ENCODE measurements at regions of chr11 and their contacts with region 1.

Region 1: GRCh38 chr11:66069715-66070603 is at the start of gene PACS1:
- DNase-seq: peak in 1 of 2 experiments; percentile 73
- H3K4me3 ChIP-seq: peak within 1 kb of the TSS; percentile 72
- H3K27ac ChIP-seq: no peak within 1 kb of the TSS
- H3K4me1 ChIP-seq: peaks cover 22% of the 10 kb centered on the region
- H3K27me3 ChIP-seq: no peaks in the 10 kb centered on the region
- CTCF ChIP-seq: no peak
- total RNA-seq, gene PACS1: 100 and 102 TPM in 2 replicates

Region 2: DNA sequence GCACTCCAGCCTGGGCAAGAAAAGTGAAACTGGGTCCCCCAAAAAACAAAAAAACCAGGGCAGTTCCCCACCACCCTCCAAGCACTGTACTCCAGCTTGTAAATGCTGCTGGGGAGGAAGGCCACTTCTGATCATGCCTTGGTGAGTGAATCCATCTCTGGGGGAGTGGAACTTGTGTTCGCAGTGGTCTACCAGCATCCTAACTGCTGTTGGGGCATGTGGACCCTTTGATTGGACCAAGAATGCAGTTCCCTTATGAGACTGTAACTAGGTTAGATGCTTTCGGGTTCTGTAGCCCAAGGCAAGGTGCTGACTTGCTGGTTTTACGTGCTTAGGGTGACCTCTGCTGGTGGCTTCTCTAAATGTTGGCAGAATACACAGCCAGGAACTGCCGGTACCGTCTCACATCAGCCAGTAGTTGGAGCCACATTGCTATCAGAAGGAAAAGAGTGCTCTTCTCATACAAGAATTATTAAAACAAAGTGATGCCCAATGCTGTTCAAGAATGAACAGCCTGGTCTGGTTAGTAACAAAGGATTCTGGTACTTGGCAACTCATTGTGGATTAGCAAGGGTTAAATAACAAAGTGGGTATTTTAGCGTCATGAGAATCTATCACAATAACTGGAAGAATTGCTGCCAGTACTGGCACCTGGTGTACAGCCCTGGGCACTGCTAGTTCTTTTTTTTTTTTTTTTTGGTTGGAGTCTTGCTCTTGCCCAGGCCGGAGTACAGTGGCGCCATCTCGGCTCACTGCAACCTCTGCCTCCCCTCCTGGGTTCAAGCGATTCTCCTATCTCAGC is 81.0 kb before region 1 on chr11:
- CTCF ChIA-PET with region 1: no interaction called
- POLR2A ChIA-PET with region 1: no interaction called
- intact Hi-C with region 1: loop called (anchors 1 kb)
- DNase-seq: peak; percentile 87 to 92
- H3K4me3 ChIP-seq: no peak overlapping the region
- H3K27ac ChIP-seq: no peak overlapping the region
- H3K4me1 ChIP-seq: peaks cover 4% of the 10 kb centered on the region; the same call in 1 of the 2 replicates
- H3K27me3 ChIP-seq: no peaks in the 10 kb centered on the region
- CTCF ChIP-seq: peak; percentile 99

Region 3: DNA sequence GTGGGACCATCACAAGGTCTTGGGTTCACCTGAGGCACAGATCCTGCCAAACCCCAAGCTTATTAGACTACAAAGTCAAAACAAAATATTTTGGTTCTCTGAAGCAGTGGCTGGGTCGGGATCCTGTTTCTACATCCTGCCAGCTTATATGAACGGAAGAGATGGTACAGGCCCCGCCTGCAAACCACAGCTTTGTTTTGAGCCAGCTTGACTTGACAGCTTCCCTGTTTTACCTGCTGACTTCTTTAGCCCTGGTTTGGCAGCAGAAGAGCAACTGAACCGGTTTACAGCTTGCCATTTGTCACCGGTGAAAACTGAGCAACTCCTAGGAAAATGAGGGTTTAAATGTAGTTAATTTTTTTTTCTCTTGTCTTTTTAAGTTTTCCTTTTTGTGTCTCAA is 11.5 kb after region 1 on chr11:
- CTCF ChIA-PET with region 1: interaction called, 25 read pairs
- POLR2A ChIA-PET with region 1: interaction called, 16 read pairs
- intact Hi-C with region 1: loop called (anchors 1 kb)
- DNase-seq: peak; percentile 79 to 94
- H3K4me3 ChIP-seq: peak overlapping the region; percentile 42; the same call in 1 of the 2 replicates
- H3K27ac ChIP-seq: peak overlapping the region; percentile 57
- H3K4me1 ChIP-seq: peaks cover 42% of the 10 kb centered on the region
- H3K27me3 ChIP-seq: no peaks in the 10 kb centered on the region
- CTCF ChIP-seq: no peak

Region 4: DNA sequence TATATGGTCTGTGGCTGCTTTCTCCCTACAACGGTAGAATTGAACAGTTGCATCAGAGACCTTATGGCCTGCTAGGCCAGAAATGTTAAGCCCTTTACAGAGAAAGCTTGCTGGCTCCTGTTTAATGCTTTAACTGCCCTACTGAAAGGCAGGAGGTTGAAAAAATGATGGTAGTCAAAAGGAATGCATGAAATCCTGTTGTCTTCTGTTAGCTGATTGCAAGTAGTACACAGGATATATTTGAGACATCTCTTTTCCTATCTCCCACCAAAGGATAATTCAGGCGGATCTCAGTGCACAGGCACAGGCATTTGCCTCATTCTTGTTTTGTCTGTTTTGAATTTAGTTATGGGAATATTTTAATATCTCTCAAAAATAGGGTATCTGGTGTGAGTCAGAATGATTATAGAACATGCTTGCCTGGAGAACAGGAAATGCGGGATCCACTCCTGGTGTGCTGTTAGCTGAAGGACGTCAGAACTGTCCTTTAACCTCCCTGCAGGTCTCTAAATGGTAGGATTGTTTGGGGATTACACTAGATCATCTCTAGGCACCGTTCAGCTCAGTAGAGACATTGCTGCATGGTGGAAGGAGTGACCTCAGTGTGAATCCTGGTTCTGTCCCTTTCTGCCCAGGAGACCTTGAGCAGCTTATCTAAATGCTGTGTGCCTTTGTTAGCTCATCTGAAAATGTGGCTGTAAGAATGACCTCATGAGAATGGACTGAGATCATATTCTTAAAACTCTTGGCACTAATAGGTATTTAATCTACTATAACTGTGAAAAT is 49.6 kb after region 1 on chr11:
- CTCF ChIA-PET with region 1: interaction called, 15 read pairs
- POLR2A ChIA-PET with region 1: no interaction called
- intact Hi-C with region 1: no loop called
- DNase-seq: peak; percentile 56 to 81
- H3K4me3 ChIP-seq: 0 out of 2 replicates have a peak overlapping the region, but pooled peaks have one; percentile 15
- H3K27ac ChIP-seq: peak overlapping the region; percentile 86
- H3K4me1 ChIP-seq: peaks cover 41% of the 10 kb centered on the region
- H3K27me3 ChIP-seq: no peaks in the 10 kb centered on the region
- CTCF ChIP-seq: no peak

Region 5: DNA sequence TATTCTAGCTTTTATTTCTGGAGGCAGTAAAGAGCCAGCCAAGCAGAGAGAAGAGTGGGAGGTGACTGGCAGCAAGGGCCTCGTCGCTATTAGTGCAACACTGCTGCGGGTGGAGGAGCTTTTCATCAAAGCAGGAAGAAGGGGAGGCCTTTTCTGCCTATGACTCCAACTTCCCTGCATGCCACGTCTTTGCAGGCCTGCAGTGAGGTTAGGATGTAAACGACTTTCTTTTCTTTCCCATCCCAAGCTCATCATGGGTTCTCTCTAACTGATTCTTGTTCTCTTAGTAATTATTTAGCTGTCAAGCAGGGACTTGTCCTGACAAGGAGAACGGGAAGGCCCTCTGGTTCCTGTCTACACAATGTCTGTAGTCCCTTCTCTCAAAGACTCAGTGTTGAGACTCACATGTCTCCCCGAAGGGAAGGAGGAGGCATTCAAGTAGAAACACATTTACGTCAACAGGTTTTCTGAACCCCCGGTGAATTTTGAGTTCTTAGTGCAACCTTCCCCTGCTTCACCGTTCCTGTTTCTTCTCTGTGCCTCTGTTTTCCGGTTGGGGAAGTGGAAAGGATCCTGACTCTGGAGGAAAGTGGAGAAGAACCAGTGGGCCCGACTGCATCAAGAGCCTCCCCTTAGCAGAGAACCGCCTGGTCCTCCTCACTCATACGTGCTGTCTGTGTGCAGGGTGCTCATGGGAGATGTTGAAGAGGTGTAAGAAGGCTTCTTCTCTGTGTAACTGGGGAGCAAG is 57.0 kb after region 1 on chr11:
- CTCF ChIA-PET with region 1: interaction called, 3 read pairs
- POLR2A ChIA-PET with region 1: interaction called, 11 read pairs
- intact Hi-C with region 1: no loop called
- DNase-seq: peak in 1 of 2 experiments; percentile 51
- H3K4me3 ChIP-seq: no peak overlapping the region
- H3K27ac ChIP-seq: no peak overlapping the region
- H3K4me1 ChIP-seq: peaks cover 31% of the 10 kb centered on the region
- H3K27me3 ChIP-seq: no peaks in the 10 kb centered on the region
- CTCF ChIP-seq: no peak

Region 6: GRCh38 chr11:66136752-66137123 is 66.8 kb after region 1 on chr11:
- CTCF ChIA-PET with region 1: interaction called, 7 read pairs
- POLR2A ChIA-PET with region 1: no interaction called
- intact Hi-C with region 1: loop called (anchors 1 kb)
- DNase-seq: no peak
- H3K4me3 ChIP-seq: no peak overlapping the region
- H3K27ac ChIP-seq: no peak overlapping the region
- H3K4me1 ChIP-seq: peaks cover 19% of the 10 kb centered on the region
- H3K27me3 ChIP-seq: no peaks in the 10 kb centered on the region
- CTCF ChIP-seq: no peak